HEK293 (cell line): ENCODE measurements at regions of chr18 and their contacts with region 1.

Region 1: GRCh38 chr18:6885992-6886796 is 156.7 kb downstream of the ARHGAP28 start:
- H3K4me3 ChIP-seq: no peak overlapping the region
- H3K27ac ChIP-seq: no peak overlapping the region
- H3K4me1 ChIP-seq: no peaks in the 10 kb centered on the region
- CTCF ChIP-seq: peak; percentile 51

Region 2: GRCh38 chr18:6537475-6537874 is 348.7 kb before region 1 on chr18:
- CTCF ChIA-PET with region 1: interaction called, 105 read pairs
- POLR2A ChIA-PET with region 1: no interaction called
- H3K4me3 ChIP-seq: no peak overlapping the region
- H3K27ac ChIP-seq: no peak overlapping the region
- H3K4me1 ChIP-seq: no peaks in the 10 kb centered on the region; the same call in 1 of the 2 replicates
- CTCF ChIP-seq: no peak

Region 3: GRCh38 chr18:6543330-6543908 is 342.8 kb before region 1 on chr18:
- CTCF ChIA-PET with region 1: interaction called, 105 read pairs
- POLR2A ChIA-PET with region 1: no interaction called
- H3K4me3 ChIP-seq: no peak overlapping the region
- H3K27ac ChIP-seq: no peak overlapping the region
- H3K4me1 ChIP-seq: no peaks in the 10 kb centered on the region; the same call in 1 of the 2 replicates
- CTCF ChIP-seq: peak; percentile 52; the same call in 1 of the 2 replicates